ENCODE measurements at regions of chr2 and their contacts with region 1.

Region 1: GRCh38 chr2:197310271-197310985 is at the start of gene ANKRD44:
- DNase-seq: peak; percentile 96
- H3K4me3 ChIP-seq: peak within 1 kb of the TSS; percentile 63 to 94 (median 83)
- H3K27ac ChIP-seq: peak within 1 kb of the TSS; percentile 83 to 88 (median 86)
- H3K4me1 ChIP-seq: peaks cover 0 to 47% (median 37%) of the 10 kb centered on the region in 4 donors
- H3K27me3 ChIP-seq: no peaks in the 10 kb centered on the region
- CTCF ChIP-seq: peak; percentile 16 to 50 (median 38)
- EP300 ChIP-seq: no peak
- POLR2A ChIP-seq: peak; percentile 28 to 42
- total RNA-seq, gene ANKRD44: 34.2 to 41.1 (median 37.6) TPM

Region 2: DNA sequence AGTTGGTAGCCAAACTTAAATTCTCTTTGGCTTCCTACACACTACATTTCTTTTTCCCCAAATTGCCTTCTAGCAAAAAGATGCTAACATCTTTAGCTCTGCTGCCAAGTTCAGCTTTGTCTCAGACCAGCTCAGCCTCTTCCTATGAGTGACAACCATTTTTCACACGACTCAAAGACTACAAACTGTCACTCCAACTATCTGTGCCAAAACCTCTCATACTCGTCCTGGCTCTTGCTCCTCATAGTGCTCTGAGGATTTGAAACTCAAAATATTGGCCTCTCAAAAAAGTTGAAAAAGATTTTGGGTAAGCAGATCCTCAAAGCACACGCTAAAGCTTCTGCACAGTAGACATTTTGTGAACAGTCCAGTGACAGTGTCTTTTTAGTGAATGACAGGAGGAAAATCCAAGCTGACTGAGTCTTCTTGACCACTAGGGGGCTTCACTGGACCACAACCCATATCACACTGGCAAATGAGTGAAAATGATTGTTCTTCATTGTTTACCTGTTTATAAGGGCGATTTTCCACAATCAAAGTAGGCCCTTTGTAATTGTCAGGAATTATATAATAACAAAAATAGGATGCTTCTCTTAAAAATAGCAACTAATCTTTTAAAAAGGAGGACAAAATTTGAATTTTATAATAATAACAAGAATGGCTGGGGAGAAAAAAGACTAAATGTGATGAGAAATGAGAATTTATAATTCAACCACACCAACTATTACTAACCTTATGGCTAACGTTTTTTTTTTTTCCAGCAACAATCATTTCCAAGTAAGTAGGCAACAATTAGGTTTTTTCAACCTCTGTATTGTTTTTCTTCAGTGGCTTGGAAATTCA is 298.4 kb before region 1 on chr2:
- intact Hi-C with region 1: loop called (anchors 5 kb)
- DNase-seq: no peak
- H3K4me3 ChIP-seq: no peak overlapping the region
- H3K27ac ChIP-seq: no peak overlapping the region
- H3K4me1 ChIP-seq: no peaks in the 10 kb centered on the region
- H3K27me3 ChIP-seq: no peaks in the 10 kb centered on the region
- CTCF ChIP-seq: peak; percentile 23 to 71 (median 66)
- EP300 ChIP-seq: no peak
- POLR2A ChIP-seq: no peak

Region 3: DNA sequence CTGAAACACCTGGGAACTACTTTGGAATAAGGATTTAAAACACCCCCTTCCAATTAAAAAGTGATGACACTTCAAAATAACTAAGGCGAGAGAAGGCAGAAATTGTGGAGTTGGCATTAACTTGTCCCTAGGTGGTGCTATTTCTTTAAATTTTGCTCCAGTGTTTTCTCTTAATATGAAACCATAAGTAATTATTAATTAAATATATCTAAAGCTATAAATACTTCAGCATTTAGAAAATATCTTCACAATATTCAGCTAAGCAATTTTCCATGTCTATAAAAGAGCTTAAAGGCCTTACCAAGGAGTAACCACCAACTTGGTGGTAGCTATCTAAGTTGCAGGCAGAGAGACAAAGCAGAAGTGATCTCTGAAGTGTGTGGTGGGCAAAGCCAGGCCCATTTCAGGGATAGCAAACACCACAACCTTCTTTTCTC is 197.1 kb before region 1 on chr2:
- intact Hi-C with region 1: loop called (anchors 1 kb)
- DNase-seq: no peak
- H3K4me3 ChIP-seq: no peak overlapping the region
- H3K27ac ChIP-seq: no peak overlapping the region
- H3K4me1 ChIP-seq: peaks cover 0 to 8% (median 2%) of the 10 kb centered on the region in 4 donors
- H3K27me3 ChIP-seq: no peaks in the 10 kb centered on the region
- CTCF ChIP-seq: peak; percentile 28 to 59 (median 52)
- EP300 ChIP-seq: no peak
- POLR2A ChIP-seq: no peak

Region 4: DNA sequence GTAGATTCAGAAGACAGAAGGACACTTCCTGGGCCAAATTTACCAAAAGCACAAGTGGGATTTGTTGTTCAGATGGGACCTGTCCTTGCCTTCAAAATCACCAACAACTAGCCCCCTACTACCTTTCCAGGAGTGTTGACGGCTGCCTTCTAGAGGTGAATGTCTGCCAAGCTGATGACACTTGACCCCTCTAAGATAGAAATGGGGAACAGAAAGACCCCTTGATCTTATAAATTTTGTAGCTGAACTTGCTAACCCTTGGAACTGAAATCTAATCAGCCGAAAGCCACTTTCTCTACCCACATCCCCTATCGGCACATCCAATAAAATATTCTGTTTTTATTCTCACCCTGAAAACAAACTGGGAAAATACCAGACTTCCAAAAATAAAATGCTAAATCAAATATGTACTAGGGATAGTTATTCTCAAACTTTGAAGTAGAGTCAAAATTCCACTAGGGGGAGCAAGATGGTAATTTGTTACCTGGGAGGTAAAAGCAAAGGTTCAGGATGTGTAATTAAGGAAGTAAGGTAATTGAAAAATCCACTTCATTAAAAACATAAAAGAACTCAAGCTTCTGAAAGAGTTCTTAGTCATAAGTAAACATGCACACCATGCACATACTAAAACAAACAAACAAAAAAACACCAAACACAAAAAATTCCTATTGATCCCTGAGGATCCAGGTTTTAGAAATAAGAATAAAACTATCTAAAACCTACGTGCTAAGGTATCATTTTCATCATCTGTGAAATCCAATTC is 119.1 kb before region 1 on chr2:
- intact Hi-C with region 1: loop called (anchors 1 kb)
- DNase-seq: no peak
- H3K4me3 ChIP-seq: no peak overlapping the region
- H3K27ac ChIP-seq: no peak overlapping the region
- H3K4me1 ChIP-seq: peaks cover 0 to 51% (median 20%) of the 10 kb centered on the region in 4 donors
- H3K27me3 ChIP-seq: no peaks in the 10 kb centered on the region
- CTCF ChIP-seq: peak; percentile 15 to 80 (median 62)
- EP300 ChIP-seq: no peak
- POLR2A ChIP-seq: no peak

Region 5: DNA sequence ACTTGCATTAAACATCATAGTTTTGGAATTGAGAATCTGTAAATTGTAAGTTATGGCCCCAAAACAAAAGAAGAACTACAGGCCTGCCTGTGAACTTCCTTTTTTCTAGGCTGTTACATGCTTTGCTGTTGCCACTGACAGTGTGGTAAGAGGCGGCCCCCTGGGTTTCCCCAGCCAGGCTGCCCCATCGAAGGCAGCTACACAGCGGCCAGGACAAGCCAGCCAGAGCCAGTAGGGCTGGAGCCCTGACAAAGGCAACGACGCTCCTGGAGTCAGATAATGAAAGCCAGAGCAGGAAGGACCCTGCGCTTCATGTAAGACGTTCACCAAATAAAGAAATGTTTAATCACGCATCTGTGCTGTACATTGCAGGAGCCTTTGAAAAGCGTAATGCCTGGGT is 54.9 kb before region 1 on chr2:
- intact Hi-C with region 1: loop called (anchors 5 kb)
- DNase-seq: peak; percentile 88
- H3K4me3 ChIP-seq: peak overlapping the region in 2 of 4 donors; percentile 23 to 26
- H3K27ac ChIP-seq: peak overlapping the region; percentile 61 to 87 (median 78)
- H3K4me1 ChIP-seq: peaks cover 0 to 60% (median 40%) of the 10 kb centered on the region in 4 donors
- H3K27me3 ChIP-seq: no peaks in the 10 kb centered on the region
- CTCF ChIP-seq: no peak
- EP300 ChIP-seq: no peak
- POLR2A ChIP-seq: no peak

Region 6: GRCh38 chr2:197378494-197379307 is 68.3 kb after region 1 on chr2:
- intact Hi-C with region 1: loop called (anchors 2 kb)
- DNase-seq: no peak
- H3K4me3 ChIP-seq: no peak overlapping the region
- H3K27ac ChIP-seq: no peak overlapping the region
- H3K4me1 ChIP-seq: peaks cover 0 to 8% (median 3%) of the 10 kb centered on the region in 4 donors
- H3K27me3 ChIP-seq: no peaks in the 10 kb centered on the region
- CTCF ChIP-seq: peak; percentile 54 to 71 (median 62)
- EP300 ChIP-seq: no peak
- POLR2A ChIP-seq: no peak

Measured in sigmoid colon (tissue), 7 donors.